HCT116 (cell line): ENCODE measurements at regions of chr1 and their contacts with region 1.

Region 1: DNA sequence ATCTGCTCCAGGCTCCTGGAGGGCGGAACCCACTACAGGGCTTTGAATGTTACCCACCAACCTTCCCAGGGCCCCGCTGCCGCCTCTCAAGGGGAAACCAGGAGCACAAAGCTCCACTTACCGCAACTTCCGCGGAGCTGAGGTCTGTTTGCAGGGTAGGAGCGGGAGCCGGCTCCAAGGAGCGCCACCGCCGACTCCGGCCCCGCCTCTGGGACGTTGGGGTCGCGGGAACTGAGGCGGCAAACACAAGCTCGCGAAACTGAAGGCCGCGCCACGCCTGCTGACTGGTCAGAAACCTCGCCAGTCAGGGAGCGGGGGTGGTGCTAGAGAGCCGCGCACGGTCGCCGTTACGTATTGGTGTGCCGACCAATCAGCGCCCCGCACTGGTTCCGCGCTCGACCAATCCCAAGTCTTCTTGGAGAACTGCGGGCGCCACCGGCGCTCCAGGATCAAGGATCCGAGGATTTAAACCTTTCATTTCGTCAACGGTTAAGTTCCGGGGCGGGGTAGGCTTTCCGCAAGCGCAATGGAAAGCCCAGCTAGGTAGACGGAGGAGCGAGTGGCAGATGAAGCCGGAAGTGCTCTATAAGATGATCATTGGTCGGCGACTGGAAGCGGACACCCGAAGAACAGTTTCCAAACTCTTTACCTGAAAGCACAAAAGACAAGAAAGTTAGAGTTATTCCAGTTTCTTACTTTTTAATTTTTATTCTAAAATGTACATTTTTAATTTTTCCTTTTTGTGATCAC is at the start of gene STIL:
- DNase-seq: peak; percentile 100
- ATAC-seq: peak; percentile 93
- H3K4me3 ChIP-seq: peak within 1 kb of the TSS; percentile 97 to 98
- H3K27ac ChIP-seq: peak within 1 kb of the TSS; percentile 91
- H3K4me1 ChIP-seq: peaks cover 5 to 14% of the 10 kb centered on the region in 2 experiments; a peak in 3 of 4 replicates
- H3K27me3 ChIP-seq: no peaks in the 10 kb centered on the region
- CTCF ChIP-seq: no peak
- POLR2A ChIP-seq: peak; percentile 73
- RAD21 ChIP-seq: no peak
- total RNA-seq, gene STIL: 34.4 TPM

Region 2: GRCh38 chr1:47333922-47334764 is 20.1 kb after region 1 on chr1:
- CTCF ChIA-PET with region 1: interaction called, 15 read pairs
- POLR2A ChIA-PET with region 1: interaction called, 19 read pairs
- RAD21 ChIA-PET with region 1: no interaction called
- intact Hi-C with region 1: loop called (anchors 1 kb)
- DNase-seq: peak; percentile 44
- ATAC-seq: peak; percentile 92
- H3K4me3 ChIP-seq: peak overlapping the region; percentile 85 to 87
- H3K27ac ChIP-seq: peak overlapping the region; percentile 97
- H3K4me1 ChIP-seq: peaks cover 8 to 17% of the 10 kb centered on the region in 2 experiments; a peak in 2 of 4 replicates
- H3K27me3 ChIP-seq: no peaks in the 10 kb centered on the region
- CTCF ChIP-seq: no peak; a peak in 1 of 6 replicates
- POLR2A ChIP-seq: no peak
- RAD21 ChIP-seq: no peak